BJ (cell line): ENCODE measurements at regions of chr16 and their contacts with region 1.

Region 1: GRCh38 chr16:56576585-56577293 is 11.9 kb downstream of the MT4 start:
- DNase-seq: no peak
- H3K4me3 ChIP-seq: no peak overlapping the region
- H3K27me3 ChIP-seq: peaks cover 2% of the 10 kb centered on the region
- CTCF ChIP-seq: peak; percentile 83

Region 2: DNA sequence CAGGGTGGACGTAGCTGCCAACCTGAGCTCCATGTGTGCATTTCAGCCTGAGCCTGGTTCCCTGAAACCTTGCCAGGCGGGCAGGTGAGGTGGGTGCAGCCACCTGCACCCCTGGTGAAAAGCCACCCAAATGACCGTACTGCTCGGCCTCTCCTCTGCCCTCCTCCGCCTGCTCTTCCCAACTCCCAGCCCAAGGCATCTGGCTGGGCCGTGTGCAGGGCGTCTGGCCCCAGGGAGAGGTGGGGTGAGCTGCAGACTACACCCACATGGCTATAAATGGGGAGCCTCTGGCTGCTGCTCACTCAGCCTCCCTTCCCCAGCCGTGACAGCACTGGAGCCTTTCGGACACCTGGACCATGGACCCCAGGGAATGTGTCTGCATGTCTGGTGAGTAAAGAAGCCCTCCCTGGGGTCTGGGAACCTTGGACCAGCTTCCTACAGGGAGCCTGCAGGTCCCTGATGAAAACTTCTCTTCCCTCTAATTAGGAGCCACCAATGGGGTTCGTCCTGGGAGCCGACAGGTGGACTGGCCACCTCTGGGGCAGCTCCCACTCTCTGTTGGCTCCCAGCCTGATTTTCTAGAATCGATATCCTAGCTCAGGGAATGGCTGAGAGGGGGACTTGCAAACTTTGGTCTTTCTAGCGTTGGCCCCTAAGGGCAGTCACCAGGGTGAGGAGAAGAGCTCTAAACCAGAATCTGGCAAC is 11.8 kb before region 1 on chr16 and contains the start of gene MT4:
- CTCF ChIA-PET with region 1: interaction called, 22 read pairs
- POLR2A ChIA-PET with region 1: no interaction called
- DNase-seq: no peak
- H3K4me3 ChIP-seq: no peak within 1 kb of the TSS
- H3K27me3 ChIP-seq: peaks cover 14% of the 10 kb centered on the region
- CTCF ChIP-seq: no peak
- polyA plus RNA-seq, gene MT4: not detected in 2 replicates

Region 3: GRCh38 chr16:56600398-56600999 is 23.8 kb after region 1 on chr16:
- CTCF ChIA-PET with region 1: interaction called, 22 read pairs
- POLR2A ChIA-PET with region 1: no interaction called
- DNase-seq: no peak
- H3K4me3 ChIP-seq: no peak overlapping the region
- H3K27me3 ChIP-seq: peaks cover 2% of the 10 kb centered on the region; the same call in 1 of the 2 replicates
- CTCF ChIP-seq: peak; percentile 78

Region 4: DNA sequence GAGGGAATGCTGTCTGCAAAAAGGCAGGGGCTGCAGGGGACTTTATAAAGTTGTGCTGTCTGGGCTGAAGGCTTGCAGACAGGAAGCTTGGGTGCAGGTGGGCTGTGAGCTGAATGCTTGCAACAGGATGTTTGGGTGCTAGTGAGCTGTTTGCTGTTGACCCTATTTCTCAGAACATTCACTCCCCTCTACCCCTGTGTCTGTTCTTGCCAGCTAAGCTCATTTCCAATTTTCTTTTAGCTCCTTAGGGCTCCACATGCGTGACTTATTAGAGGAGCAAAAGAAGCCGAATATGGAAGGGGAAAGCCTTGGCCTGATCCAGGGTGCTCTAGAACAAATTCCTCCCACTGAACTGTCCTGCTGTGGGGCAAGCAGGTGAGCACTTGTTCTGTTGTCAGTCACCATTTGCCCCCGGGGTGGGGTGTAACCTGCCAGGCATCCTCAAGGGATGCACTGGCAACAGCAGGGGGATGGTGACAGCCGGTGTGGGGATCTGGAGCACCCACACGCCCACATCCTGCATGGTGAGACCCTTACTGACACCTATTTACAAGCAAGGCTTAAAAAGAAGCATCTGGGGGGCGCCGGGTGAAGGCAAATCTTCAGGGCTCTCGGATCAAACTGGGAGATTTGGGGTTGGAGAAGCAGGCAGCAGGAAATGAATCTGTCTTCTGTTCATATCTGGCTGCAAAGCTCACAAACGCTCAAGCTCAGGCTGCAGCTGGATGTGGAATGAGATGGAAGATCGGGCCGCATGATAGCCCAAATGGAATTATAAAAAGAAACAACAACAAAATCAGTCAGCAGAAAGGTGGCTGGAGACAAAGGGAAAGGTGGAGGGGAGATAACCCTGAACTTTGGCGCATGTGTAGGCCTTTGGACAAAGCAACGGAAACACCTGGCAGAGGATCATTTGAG is 132.0 kb after region 1 on chr16:
- CTCF ChIA-PET with region 1: interaction called, 53 read pairs
- POLR2A ChIA-PET with region 1: no interaction called
- DNase-seq: no peak
- H3K4me3 ChIP-seq: no peak overlapping the region
- H3K27me3 ChIP-seq: peaks cover 7% of the 10 kb centered on the region
- CTCF ChIP-seq: no peak